Activated CD8-positive, alpha-beta T cell treated with anti-CD3 and anti-CD28 coated beads, Interleukin-2, amount 10 ng/mL, durations not matched to agents 7 days and 5 days (primary cell): ENCODE measurements at regions of chr13 and their contacts with region 1.

Region 1: GRCh38 chr13:51797664-51798488 is 6.1 kb downstream of the DHRS12 start:
- DNase-seq: peak; percentile 77
- ATAC-seq: peak; percentile 76
- H3K4me3 Mint-ChIP-seq: no peak overlapping the region
- H3K27ac Mint-ChIP-seq: no peak overlapping the region
- H3K4me1 Mint-ChIP-seq: peaks cover 24% of the 10 kb centered on the region
- H3K27me3 Mint-ChIP-seq: no peaks in the 10 kb centered on the region

Region 2: DNA sequence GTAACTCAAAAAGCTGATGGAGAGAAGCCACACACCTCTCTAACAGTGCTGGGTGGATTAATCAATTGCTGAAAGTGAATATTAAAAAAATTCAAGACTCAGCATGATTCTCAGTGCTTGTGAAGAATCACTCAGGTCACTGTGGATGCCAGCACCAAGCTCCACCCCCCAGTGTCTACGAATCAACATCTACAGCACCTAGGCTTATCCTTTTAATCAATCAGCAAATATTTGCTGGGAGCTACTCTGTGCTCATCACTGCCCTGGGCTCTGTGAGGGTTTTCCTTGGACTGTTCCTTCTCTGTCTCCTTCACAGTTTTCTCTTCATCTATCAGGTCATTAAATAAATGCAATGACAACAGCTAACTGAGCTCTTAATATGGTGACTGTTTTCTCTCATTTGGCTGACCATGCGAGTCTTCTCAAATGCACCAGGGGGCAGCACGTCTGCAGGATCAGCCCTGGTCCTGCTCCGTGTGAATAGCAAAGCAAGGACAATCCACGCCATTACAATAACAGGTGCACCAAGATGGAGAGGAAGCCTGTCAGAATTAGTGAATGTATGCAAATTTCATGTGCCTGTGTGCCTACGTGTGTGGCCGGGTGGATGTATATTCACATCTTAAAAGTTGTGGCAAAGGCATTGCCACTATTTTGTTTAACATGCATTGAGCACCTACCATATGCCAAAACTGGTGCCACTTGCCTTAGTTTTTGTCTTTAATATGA is 672.2 kb before region 1 on chr13:
- CTCF ChIA-PET with region 1: interaction called, 37 read pairs
- POLR2A ChIA-PET with region 1: no interaction called
- DNase-seq: peak; percentile 62
- ATAC-seq: peak; percentile 82
- H3K4me3 Mint-ChIP-seq: no peak overlapping the region
- H3K27ac Mint-ChIP-seq: no peak overlapping the region
- H3K4me1 Mint-ChIP-seq: peaks cover 11% of the 10 kb centered on the region
- H3K27me3 Mint-ChIP-seq: peaks cover 16% of the 10 kb centered on the region

Region 3: GRCh38 chr13:51435002-51435578 is 362.8 kb before region 1 on chr13:
- CTCF ChIA-PET with region 1: interaction called, 94 read pairs
- POLR2A ChIA-PET with region 1: interaction called, 3 read pairs
- DNase-seq: no peak
- ATAC-seq: no peak
- H3K4me3 Mint-ChIP-seq: no peak overlapping the region
- H3K27ac Mint-ChIP-seq: no peak overlapping the region
- H3K4me1 Mint-ChIP-seq: peaks cover 10% of the 10 kb centered on the region
- H3K27me3 Mint-ChIP-seq: no peaks in the 10 kb centered on the region

Region 4: GRCh38 chr13:51452361-51453206 is 345.3 kb before region 1 on chr13 and contains the start of gene INTS6:
- CTCF ChIA-PET with region 1: interaction called, 30 read pairs
- POLR2A ChIA-PET with region 1: interaction called, 12 read pairs
- DNase-seq: peak; percentile 99
- ATAC-seq: peak; percentile 84
- H3K4me3 Mint-ChIP-seq: peak within 1 kb of the TSS; percentile 94
- H3K27ac Mint-ChIP-seq: peak within 1 kb of the TSS; percentile 97
- H3K4me1 Mint-ChIP-seq: peaks cover 36% of the 10 kb centered on the region
- H3K27me3 Mint-ChIP-seq: no peaks in the 10 kb centered on the region
- total RNA-seq, gene INTS6: 48.9 to 52.0 TPM

Region 5: GRCh38 chr13:51595416-51595815 is 202.5 kb before region 1 on chr13:
- CTCF ChIA-PET with region 1: no interaction called
- POLR2A ChIA-PET with region 1: no interaction called
- DNase-seq: no peak
- ATAC-seq: no peak
- H3K4me3 Mint-ChIP-seq: no peak overlapping the region
- H3K27ac Mint-ChIP-seq: no peak overlapping the region
- H3K4me1 Mint-ChIP-seq: peaks cover 18% of the 10 kb centered on the region
- H3K27me3 Mint-ChIP-seq: no peaks in the 10 kb centered on the region

Region 6: DNA sequence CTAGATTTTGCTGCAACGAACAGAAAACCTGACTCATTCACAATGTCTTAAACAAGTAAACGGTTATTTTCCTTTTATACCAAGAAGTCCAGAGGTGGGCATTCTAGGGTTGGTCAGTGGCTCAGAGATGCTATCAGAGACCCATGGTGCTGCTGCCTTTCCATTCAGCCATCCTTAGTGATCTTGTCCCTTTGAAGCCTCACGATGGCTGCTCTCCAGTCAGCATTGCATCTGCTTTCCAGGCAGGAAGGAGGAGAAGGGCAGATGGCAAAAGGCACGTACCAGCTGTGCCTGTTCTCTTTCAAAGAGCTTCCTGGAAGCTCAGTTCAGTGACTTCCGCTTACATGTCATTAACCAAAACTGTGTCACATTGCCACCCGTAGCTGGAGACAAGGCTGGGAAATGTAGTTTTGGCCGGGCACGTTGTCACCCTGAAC is 183.5 kb before region 1 on chr13:
- CTCF ChIA-PET with region 1: interaction called, 25 read pairs
- POLR2A ChIA-PET with region 1: interaction called, 3 read pairs
- DNase-seq: peak; percentile 69
- ATAC-seq: peak; percentile 90
- H3K4me3 Mint-ChIP-seq: peak overlapping the region; percentile 77
- H3K27ac Mint-ChIP-seq: peak overlapping the region; percentile 95
- H3K4me1 Mint-ChIP-seq: peaks cover 15% of the 10 kb centered on the region
- H3K27me3 Mint-ChIP-seq: no peaks in the 10 kb centered on the region

Region 7: DNA sequence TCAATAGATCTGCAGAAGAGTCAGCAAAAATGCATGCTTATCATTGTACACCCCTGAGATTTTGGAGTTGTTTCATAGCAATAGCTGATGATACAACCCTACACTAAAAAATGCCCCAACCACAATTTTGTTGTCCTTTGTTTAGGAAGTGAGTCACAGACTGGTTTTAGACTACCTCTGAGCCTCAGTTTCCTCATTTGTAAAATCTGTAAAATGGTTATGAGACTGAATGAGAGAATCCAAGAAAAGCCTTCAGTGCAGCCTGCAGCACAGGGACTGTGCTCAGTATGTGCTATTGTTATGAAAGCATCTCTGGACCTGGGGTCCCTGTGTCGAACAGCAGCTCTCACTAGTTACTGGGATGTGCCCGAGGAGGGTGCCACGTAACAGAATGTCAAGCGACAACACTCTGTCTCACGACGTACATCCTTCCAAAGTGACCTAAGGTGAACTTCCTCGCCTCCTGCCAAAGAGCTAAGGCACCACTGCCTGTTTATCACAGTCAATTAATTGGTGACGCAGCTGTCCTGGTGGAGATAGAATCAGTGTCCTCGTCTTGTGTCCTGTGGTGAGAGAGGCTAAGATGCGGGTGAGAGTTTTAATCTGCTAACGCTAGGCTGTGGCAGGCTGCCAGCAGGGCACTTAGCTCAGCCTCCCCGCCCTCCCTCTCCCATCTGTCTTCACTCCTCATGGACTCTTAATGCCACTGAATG is 12.0 kb before region 1 on chr13:
- CTCF ChIA-PET with region 1: interaction called, 17 read pairs
- POLR2A ChIA-PET with region 1: interaction called, 3 read pairs
- DNase-seq: no peak
- ATAC-seq: no peak
- H3K4me3 Mint-ChIP-seq: no peak overlapping the region
- H3K27ac Mint-ChIP-seq: no peak overlapping the region
- H3K4me1 Mint-ChIP-seq: no peaks in the 10 kb centered on the region
- H3K27me3 Mint-ChIP-seq: no peaks in the 10 kb centered on the region

Region 8: DNA sequence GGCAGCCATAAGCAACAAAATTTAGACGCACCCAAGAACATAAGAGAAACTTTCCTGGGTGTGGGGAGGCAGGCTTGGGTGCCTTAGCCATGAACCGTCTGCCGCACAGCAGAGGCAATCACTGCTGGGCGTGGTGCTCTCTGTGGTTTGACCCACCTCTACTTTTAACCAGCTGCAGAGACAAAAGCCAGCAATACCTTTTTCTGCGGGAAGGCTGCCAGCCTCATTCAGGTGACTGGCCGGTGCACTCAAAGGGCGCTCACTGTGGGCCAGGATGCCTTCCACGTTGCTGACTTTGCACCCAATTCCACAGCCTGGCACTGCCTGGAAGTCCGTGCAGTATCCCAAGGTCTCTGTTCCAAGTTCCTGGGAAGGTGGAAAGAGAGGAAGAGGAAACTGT is 144.3 kb after region 1 on chr13:
- CTCF ChIA-PET with region 1: no interaction called
- POLR2A ChIA-PET with region 1: no interaction called
- DNase-seq: peak; percentile 31
- ATAC-seq: no peak
- H3K4me3 Mint-ChIP-seq: no peak overlapping the region
- H3K27ac Mint-ChIP-seq: no peak overlapping the region
- H3K4me1 Mint-ChIP-seq: peaks cover 14% of the 10 kb centered on the region
- H3K27me3 Mint-ChIP-seq: peaks cover 17% of the 10 kb centered on the region